CD8-positive, alpha-beta T cell (primary cell): ENCODE measurements at regions of chr5 and their contacts with region 1.

Region 1: DNA sequence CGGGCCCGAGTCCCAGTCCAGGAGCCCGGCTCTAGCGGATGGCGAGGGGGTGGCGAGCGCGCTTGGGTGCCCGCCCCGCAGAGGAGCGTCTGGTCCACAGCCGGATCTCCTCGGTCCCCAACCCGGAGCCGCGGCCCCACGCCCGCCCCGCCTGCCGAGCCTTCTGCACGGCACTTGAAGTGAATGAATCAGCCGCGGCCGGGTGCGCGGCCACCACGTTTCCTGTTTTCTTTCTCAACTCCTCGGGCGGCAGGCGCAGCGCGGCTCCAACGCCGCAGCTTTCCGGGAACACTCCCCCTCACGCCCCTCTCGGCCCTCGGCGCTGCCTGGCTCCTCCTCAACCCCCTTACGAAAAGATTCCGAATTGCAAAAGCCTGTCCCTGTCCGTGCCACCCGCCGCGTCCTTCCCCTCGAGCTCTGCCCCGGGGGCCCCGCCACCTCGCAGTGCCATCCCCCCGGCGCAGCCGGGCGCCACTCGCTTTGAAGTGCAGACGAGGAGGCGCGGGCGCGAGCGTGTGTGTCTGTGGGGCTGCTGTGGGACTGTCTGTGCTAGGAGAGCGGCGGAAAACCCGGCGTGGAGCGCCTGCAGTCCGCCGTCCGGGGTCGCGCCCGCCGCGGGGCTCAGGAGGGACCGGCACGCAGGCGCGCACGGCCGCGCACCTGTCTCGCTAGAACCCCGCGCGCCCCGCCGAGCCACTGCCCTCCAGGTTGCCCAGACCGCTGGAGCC is 456.6 kb downstream of the RAB3C start:
- DNase-seq: peak; percentile 78 to 95 (median 93)
- ATAC-seq: peak; percentile 76
- H3K4me3 ChIP-seq: peak overlapping the region; percentile 59 to 90
- H3K4me3 Mint-ChIP-seq: peak overlapping the region; percentile 96
- H3K27ac ChIP-seq: peak overlapping the region; percentile 79 to 84
- H3K27ac Mint-ChIP-seq: peak overlapping the region; percentile 99
- H3K4me1 ChIP-seq: peaks cover 42% of the 10 kb centered on the region
- H3K4me1 Mint-ChIP-seq: peaks cover 58% of the 10 kb centered on the region
- H3K27me3 ChIP-seq: no peaks in the 10 kb centered on the region
- H3K27me3 Mint-ChIP-seq: no peaks in the 10 kb centered on the region
- CTCF ChIP-seq: no peak

Region 2: DNA sequence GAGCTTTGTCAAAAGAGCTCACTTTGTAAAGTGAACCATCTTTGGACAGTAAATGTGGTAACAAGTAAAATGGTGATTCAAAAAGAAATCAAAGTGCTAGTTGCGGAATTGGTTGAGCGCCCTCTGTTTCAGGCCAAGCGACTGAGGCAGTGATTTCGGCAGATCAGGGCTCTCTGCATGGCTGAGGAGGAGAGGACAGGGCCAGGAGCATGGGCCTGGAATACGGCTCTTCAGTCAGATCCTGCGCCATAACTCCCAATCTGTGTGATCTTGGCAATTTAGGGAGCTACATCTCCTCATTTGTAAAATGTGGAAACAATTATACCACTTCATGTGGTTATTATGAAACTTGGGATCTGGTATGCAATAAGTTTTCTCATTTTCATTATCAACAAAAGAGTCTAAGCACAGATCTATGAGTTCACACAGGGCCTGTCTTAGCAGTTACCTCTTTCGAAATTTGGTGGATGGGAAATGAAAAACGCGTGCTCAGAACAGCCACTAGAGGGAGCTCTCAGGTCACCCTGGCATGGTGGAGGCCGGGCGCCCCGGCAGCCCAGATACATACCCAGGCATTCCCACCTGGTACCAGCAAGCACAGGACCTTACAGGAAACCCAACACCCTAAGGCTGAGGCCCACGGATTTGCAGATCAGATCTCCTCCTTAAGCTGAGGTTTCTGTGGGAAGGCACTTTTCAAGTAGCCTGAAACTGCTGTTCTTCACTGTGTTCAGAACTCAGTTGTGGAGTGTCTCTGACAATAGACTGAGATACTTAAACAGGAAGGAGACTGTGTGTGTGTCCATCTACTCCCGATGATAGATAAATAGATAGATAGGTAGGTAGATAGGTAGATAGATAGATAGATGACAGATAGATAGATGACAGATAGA is 152.9 kb before region 1 on chr5:
- CTCF ChIA-PET with region 1: interaction called, 21 read pairs
- POLR2A ChIA-PET with region 1: no interaction called
- intact Hi-C with region 1: loop called (anchors 2 to 5 kb)
- DNase-seq: peak; percentile 21 to 77 (median 58)
- ATAC-seq: peak; percentile 79
- H3K4me3 ChIP-seq: no peak overlapping the region
- H3K4me3 Mint-ChIP-seq: no peak overlapping the region
- H3K27ac ChIP-seq: no peak overlapping the region
- H3K27ac Mint-ChIP-seq: no peak overlapping the region
- H3K4me1 ChIP-seq: no peaks in the 10 kb centered on the region
- H3K4me1 Mint-ChIP-seq: peaks cover 16% of the 10 kb centered on the region
- H3K27me3 ChIP-seq: no peaks in the 10 kb centered on the region
- H3K27me3 Mint-ChIP-seq: peaks cover 9% of the 10 kb centered on the region
- CTCF ChIP-seq: peak; percentile 84

Region 3: GRCh38 chr5:59020611-59021285 is 18.7 kb before region 1 on chr5:
- CTCF ChIA-PET with region 1: no interaction called
- POLR2A ChIA-PET with region 1: interaction called, 3 read pairs
- intact Hi-C with region 1: loop called in 1 of 2 experiments (anchors 2 kb)
- DNase-seq: peak in 3 of 9 experiments; percentile 7 to 34 (median 29)
- ATAC-seq: peak; percentile 39
- H3K4me3 ChIP-seq: no peak overlapping the region
- H3K4me3 Mint-ChIP-seq: no peak overlapping the region
- H3K27ac ChIP-seq: no peak overlapping the region
- H3K27ac Mint-ChIP-seq: no peak overlapping the region
- H3K4me1 ChIP-seq: peaks cover 3% of the 10 kb centered on the region
- H3K4me1 Mint-ChIP-seq: peaks cover 46% of the 10 kb centered on the region
- H3K27me3 ChIP-seq: no peaks in the 10 kb centered on the region
- H3K27me3 Mint-ChIP-seq: no peaks in the 10 kb centered on the region
- CTCF ChIP-seq: no peak

Region 4: GRCh38 chr5:59079622-59080620 is 40.5 kb after region 1 on chr5:
- CTCF ChIA-PET with region 1: no interaction called
- POLR2A ChIA-PET with region 1: interaction called, 4 read pairs
- intact Hi-C with region 1: loop called in 1 of 2 experiments (anchors 5 kb)
- DNase-seq: no peak
- ATAC-seq: no peak
- H3K4me3 ChIP-seq: no peak overlapping the region
- H3K4me3 Mint-ChIP-seq: no peak overlapping the region
- H3K27ac ChIP-seq: no peak overlapping the region
- H3K27ac Mint-ChIP-seq: no peak overlapping the region
- H3K4me1 ChIP-seq: no peaks in the 10 kb centered on the region
- H3K4me1 Mint-ChIP-seq: no peaks in the 10 kb centered on the region
- H3K27me3 ChIP-seq: no peaks in the 10 kb centered on the region
- H3K27me3 Mint-ChIP-seq: no peaks in the 10 kb centered on the region
- CTCF ChIP-seq: no peak

Region 5: DNA sequence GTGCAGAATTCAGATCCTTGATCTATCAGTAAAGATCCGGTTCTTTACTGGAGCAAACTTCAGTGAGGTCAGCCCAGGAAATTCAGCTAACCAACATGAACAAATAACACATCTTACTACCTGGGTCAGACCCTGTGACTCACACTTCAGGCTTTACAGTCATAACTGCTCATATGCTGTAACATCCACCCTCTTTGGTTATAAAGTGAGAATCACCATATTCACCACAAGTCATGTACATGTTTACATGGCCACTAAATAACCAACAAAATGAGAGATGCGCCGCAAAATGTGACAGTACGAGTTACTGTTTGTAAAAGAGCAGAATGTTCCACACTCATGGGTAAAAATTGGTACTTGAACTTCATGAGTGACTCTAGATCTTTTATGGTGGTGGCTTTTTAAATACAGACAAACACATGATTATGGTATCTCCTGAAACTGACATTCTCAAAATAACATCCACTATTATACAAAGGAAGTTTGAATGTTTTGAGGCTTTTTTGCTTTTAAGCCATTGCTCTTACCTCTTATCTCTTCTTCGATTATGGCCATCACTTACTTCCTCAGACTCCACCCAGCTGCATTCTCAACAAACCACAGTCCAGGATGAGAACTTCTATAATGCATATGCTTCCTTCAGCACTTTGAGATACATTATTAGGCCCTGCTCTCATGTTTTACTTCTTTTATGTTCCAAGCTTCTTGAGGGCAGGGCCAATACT is 60.0 kb after region 1 on chr5:
- CTCF ChIA-PET with region 1: interaction called, 7 read pairs
- POLR2A ChIA-PET with region 1: interaction called, 5 read pairs
- intact Hi-C with region 1: loop called (anchors 1 to 2 kb)
- DNase-seq: peak in 7 of 9 experiments; percentile 18 to 92 (median 45)
- ATAC-seq: peak; percentile 93
- H3K4me3 ChIP-seq: no peak overlapping the region
- H3K4me3 Mint-ChIP-seq: no peak overlapping the region
- H3K27ac ChIP-seq: peak overlapping the region in 1 of 2 experiments; percentile 79
- H3K27ac Mint-ChIP-seq: peak overlapping the region; percentile 60
- H3K4me1 ChIP-seq: peaks cover 12% of the 10 kb centered on the region
- H3K4me1 Mint-ChIP-seq: peaks cover 29% of the 10 kb centered on the region
- H3K27me3 ChIP-seq: no peaks in the 10 kb centered on the region
- H3K27me3 Mint-ChIP-seq: no peaks in the 10 kb centered on the region
- CTCF ChIP-seq: no peak

Region 6: GRCh38 chr5:59133682-59134261 is 94.3 kb after region 1 on chr5:
- CTCF ChIA-PET with region 1: interaction called, 48 read pairs
- POLR2A ChIA-PET with region 1: interaction called, 77 read pairs
- intact Hi-C with region 1: no loop called
- DNase-seq: no peak
- ATAC-seq: no peak
- H3K4me3 ChIP-seq: no peak overlapping the region
- H3K4me3 Mint-ChIP-seq: no peak overlapping the region
- H3K27ac ChIP-seq: no peak overlapping the region
- H3K27ac Mint-ChIP-seq: peak overlapping the region; percentile 35
- H3K4me1 ChIP-seq: peaks cover 10% of the 10 kb centered on the region
- H3K4me1 Mint-ChIP-seq: peaks cover 34% of the 10 kb centered on the region
- H3K27me3 ChIP-seq: no peaks in the 10 kb centered on the region
- H3K27me3 Mint-ChIP-seq: no peaks in the 10 kb centered on the region
- CTCF ChIP-seq: no peak

Region 7: DNA sequence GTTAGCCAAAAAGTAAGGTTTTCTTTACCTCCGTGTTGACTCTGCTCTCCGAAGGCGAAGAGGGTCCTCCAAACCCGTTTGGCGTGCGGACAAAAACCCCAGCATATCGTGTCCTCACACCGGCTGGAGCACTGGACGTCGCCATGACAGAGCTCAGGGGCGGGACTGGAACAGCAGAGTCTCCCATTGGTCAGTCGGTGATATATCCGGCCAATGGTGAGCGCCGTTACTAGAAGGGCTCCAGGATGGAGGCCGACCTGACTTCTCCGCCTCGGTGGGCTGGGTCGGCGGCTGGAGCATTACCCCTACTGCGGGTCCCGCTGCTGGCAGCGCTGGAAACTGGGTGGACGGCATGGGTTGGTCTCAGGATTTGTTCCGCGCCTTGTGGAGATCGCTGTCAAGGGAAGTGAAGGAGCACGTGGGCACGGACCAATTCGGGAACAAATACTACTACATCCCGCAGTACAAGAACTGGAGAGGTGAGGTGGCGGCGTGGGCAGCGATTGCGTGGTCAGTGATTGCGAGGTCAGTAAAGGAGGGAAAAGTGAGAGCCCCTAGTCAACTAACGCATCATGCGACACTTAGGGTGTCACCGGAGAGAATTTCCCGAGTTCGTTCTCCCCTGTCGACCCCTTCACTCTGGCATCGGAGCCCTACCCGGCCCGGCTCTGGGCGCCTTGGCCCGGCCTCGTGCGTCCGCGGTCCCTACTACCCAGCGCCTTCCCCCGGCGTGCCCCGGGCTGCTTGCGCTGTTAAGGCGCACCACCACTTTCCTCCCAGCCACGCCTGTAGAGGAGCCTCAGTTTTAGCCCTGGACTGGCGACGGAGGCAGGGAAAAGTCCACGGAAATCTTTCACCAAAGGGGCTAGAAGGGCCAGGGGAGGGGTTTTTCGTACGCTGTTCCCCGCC is 1905.7 kb after region 1 on chr5 and contains the starts of genes ERCC8 and NDUFAF2:
- CTCF ChIA-PET with region 1: no interaction called
- POLR2A ChIA-PET with region 1: no interaction called
- intact Hi-C with region 1: loop called in 1 of 2 experiments (anchors 10 kb)
- DNase-seq: peak; percentile 77 to 93 (median 87)
- ATAC-seq: peak; percentile 98
- H3K4me3 ChIP-seq: peak within 1 kb of the TSS; percentile 67 to 90
- H3K4me3 Mint-ChIP-seq: no peak within 1 kb of the TSS
- H3K27ac ChIP-seq: peak within 1 kb of the TSS; percentile 64 to 74
- H3K27ac Mint-ChIP-seq: no peak within 1 kb of the TSS
- H3K4me1 ChIP-seq: peaks cover 23% of the 10 kb centered on the region
- H3K4me1 Mint-ChIP-seq: peaks cover 30% of the 10 kb centered on the region
- H3K27me3 ChIP-seq: no peaks in the 10 kb centered on the region
- H3K27me3 Mint-ChIP-seq: no peaks in the 10 kb centered on the region
- CTCF ChIP-seq: no peak
- total RNA-seq, gene ERCC8: 2.5 to 3.0 TPM
- total RNA-seq, gene NDUFAF2: 5.8 to 7.1 TPM